A549 (cell line): ENCODE measurements at regions of chr12 and their contacts with region 1.

Region 1: GRCh38 chr12:47949441-47950308 is 13.7 kb upstream of the TMEM106C start:
- DNase-seq: peak; percentile 88 to 90
- ATAC-seq: peak; percentile 88 to 98
- H3K4me3 ChIP-seq: no peak overlapping the region
- H3K27ac ChIP-seq: peak overlapping the region in 1 of 2 experiments; percentile 36; a peak in 2 of 6 replicates
- H3K4me1 ChIP-seq: peaks cover 19% of the 10 kb centered on the region
- CTCF ChIP-seq: peak; percentile 86
- EP300 ChIP-seq: no peak
- POLR2A ChIP-seq: no peak
- RAD21 ChIP-seq: peak; percentile 79 to 84

Region 2: DNA sequence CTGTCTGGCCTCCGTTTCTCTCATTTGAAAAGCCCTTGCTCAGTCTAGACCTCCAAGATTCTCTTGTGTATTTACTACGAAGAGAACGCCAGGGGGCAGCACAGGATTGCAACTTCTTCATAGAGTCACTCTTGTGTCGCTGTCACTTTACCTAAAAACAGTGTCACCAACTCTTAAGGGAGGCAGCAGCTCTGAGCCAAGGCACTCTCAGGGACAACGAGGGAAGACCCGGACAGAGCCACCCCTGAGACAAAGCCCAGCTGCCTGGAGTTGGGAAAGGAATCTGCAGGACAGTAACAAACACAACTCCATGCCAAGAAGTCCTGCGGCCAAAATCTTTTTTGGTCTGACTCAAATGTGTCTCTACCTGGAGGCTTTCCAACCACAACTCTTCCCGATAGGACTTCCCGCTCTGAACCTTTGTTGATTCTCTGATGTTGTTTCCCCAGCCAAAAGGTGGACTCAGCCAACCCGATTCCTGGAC is 234.2 kb before region 1 on chr12:
- CTCF ChIA-PET with region 1: interaction called, 17 read pairs
- POLR2A ChIA-PET with region 1: no interaction called
- DNase-seq: peak; percentile 76 to 80
- ATAC-seq: peak; percentile 56 to 82; a peak in 4 of 6 replicates
- H3K4me3 ChIP-seq: no peak overlapping the region
- H3K27ac ChIP-seq: no peak overlapping the region
- H3K4me1 ChIP-seq: peaks cover 9% of the 10 kb centered on the region
- CTCF ChIP-seq: peak; percentile 93
- EP300 ChIP-seq: no peak
- POLR2A ChIP-seq: no peak
- RAD21 ChIP-seq: peak; percentile 90 to 93

Region 3: DNA sequence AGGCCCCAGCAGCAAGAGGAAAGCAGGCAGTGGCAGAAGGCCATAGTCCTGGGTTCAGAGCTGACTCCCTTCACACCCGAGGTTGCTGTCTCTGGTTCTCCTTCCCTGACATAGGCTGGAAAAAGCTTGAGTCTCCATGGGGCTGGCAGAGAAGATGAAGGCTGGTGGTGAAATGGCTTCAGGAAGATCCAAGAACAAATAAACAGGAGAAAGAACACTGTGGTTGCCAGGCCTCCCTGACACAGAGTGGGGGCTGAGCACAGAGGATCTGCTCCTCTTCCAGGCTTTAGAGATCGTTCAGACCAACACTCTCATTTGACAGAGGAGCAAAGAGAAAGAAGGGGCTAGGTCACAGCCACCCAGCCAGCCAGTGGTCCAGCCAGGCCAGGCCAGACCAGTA is 144.3 kb before region 1 on chr12:
- CTCF ChIA-PET with region 1: no interaction called
- POLR2A ChIA-PET with region 1: no interaction called
- DNase-seq: no peak
- ATAC-seq: no peak
- H3K4me3 ChIP-seq: no peak overlapping the region
- H3K27ac ChIP-seq: no peak overlapping the region
- H3K4me1 ChIP-seq: peaks cover 38% of the 10 kb centered on the region
- CTCF ChIP-seq: no peak
- EP300 ChIP-seq: no peak
- POLR2A ChIP-seq: no peak
- RAD21 ChIP-seq: no peak

Region 4: GRCh38 chr12:47844274-47845019 is 105.2 kb before region 1 on chr12:
- CTCF ChIA-PET with region 1: interaction called, 17 read pairs
- POLR2A ChIA-PET with region 1: no interaction called
- DNase-seq: no peak
- ATAC-seq: peak in 1 of 2 experiments; percentile 42; a peak in 3 of 6 replicates
- H3K4me3 ChIP-seq: no peak overlapping the region
- H3K27ac ChIP-seq: no peak overlapping the region
- H3K4me1 ChIP-seq: no peaks in the 10 kb centered on the region
- CTCF ChIP-seq: no peak
- EP300 ChIP-seq: no peak
- POLR2A ChIP-seq: no peak
- RAD21 ChIP-seq: no peak

Region 5: DNA sequence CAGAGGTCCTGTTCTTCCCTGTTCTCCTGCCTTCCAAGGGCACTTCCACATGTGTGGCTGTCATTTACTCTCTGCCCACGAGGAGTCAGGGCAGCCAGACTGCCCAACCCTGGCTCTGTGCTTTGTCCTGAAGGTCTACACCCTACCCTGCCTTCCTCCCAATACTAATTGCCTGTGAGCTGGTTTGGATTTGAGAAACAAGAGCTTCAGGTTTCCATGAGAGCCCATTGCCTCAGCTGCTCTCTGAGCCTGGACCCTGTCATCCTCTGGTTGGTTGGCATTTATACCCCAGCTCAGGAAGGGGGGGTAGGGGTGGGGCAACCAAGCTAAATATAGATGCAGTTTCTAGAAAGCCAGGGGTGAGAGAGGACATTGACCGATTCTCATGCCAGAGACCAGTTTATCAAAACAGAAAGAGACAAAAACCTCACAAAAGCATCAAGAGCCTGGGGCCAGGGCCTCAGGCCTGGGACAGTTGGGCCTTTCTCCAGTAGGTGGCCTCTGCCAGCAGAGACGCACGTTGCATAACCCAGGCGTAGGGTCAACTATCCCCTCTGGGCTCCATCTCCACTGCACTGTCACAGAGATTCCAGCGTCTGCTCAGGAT is 79.4 kb before region 1 on chr12:
- CTCF ChIA-PET with region 1: interaction called, 12 read pairs
- POLR2A ChIA-PET with region 1: no interaction called
- DNase-seq: peak; percentile 34 to 40
- ATAC-seq: peak; percentile 80 to 90
- H3K4me3 ChIP-seq: no peak overlapping the region
- H3K27ac ChIP-seq: no peak overlapping the region
- H3K4me1 ChIP-seq: no peaks in the 10 kb centered on the region
- CTCF ChIP-seq: peak; percentile 23; the same call in 1 of the 3 replicates
- EP300 ChIP-seq: no peak
- POLR2A ChIP-seq: no peak
- RAD21 ChIP-seq: peak in 1 of 2 experiments; percentile 6; a peak in 1 of 5 replicates

Region 6: DNA sequence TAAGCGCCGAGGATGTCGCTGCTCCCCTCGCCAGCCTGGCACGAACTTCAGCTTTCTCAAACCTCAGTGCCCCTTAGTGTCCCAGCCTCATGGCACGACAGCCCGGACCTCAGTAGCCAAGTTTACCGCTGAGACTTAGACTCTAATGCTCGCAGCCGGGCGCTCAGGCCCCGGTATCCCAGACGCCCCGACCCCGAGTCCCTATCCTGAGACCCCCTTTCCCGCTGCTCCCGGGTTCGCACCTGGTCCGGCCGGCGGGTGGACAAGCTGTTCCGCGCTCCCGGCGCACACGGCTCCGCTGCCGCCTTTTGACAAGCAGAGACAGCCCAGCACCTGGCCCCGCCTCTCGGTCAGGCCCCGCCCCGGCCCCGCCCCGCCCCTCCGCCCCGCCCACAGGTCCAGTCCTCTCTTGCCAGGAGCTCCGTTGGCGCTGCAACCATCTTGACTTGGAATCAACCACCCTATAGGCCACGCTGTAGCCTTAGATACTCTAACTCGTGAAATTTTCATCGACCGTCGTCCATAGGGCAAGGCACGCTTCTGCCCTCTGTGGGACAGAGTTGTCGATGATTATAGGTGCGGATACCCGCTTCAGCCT is 44.9 kb before region 1 on chr12 and contains the start of gene VDR:
- CTCF ChIA-PET with region 1: interaction called, 48 read pairs
- POLR2A ChIA-PET with region 1: interaction called, 10 read pairs
- DNase-seq: peak; percentile 87 to 89
- ATAC-seq: peak; percentile 83 to 88
- H3K4me3 ChIP-seq: peak within 1 kb of the TSS; percentile 59
- H3K27ac ChIP-seq: peak within 1 kb of the TSS; percentile 67 to 78; a peak in 5 of 6 replicates
- H3K4me1 ChIP-seq: peaks cover 19% of the 10 kb centered on the region
- CTCF ChIP-seq: no peak; the same call in 2 of the 3 replicates
- EP300 ChIP-seq: no peak
- POLR2A ChIP-seq: peak; percentile 21; the same call in 1 of the 2 replicates
- RAD21 ChIP-seq: no peak
- polyA plus RNA-seq, gene VDR: 2.1 and 2.2 TPM in 2 replicates

Region 7: GRCh38 chr12:47935184-47935583 is 14.5 kb before region 1 on chr12:
- CTCF ChIA-PET with region 1: interaction called, 12 read pairs
- POLR2A ChIA-PET with region 1: no interaction called
- DNase-seq: no peak
- ATAC-seq: no peak
- H3K4me3 ChIP-seq: no peak overlapping the region
- H3K27ac ChIP-seq: no peak overlapping the region
- H3K4me1 ChIP-seq: no peaks in the 10 kb centered on the region
- CTCF ChIP-seq: no peak
- EP300 ChIP-seq: no peak
- POLR2A ChIP-seq: no peak
- RAD21 ChIP-seq: no peak